IMR-90 (cell line): ENCODE measurements at regions of chr9 and their contacts with region 1.

Region 1: GRCh38 chr9:131334629-131335367 is 45.3 kb downstream of the PLPP7 start:
- DNase-seq: peak; percentile 38
- ATAC-seq: peak; percentile 18
- H3K4me3 ChIP-seq: no peak overlapping the region
- H3K27ac ChIP-seq: no peak overlapping the region
- H3K4me1 ChIP-seq: no peaks in the 10 kb centered on the region
- H3K27me3 ChIP-seq: no peaks in the 10 kb centered on the region
- CTCF ChIP-seq: no peak
- POLR2A ChIP-seq: no peak
- RAD21 ChIP-seq: no peak

Region 2: GRCh38 chr9:131053896-131054295 is 280.9 kb before region 1 on chr9:
- CTCF ChIA-PET with region 1: interaction called, 3 read pairs
- POLR2A ChIA-PET with region 1: no interaction called
- dilution Hi-C with region 1: no loop called
- in situ Hi-C with region 1: no loop called
- intact Hi-C with region 1: loop called (anchors 1 kb)
- DNase-seq: no peak
- ATAC-seq: no peak
- H3K4me3 ChIP-seq: no peak overlapping the region
- H3K27ac ChIP-seq: no peak overlapping the region
- H3K4me1 ChIP-seq: no peaks in the 10 kb centered on the region
- H3K27me3 ChIP-seq: peaks cover 25% of the 10 kb centered on the region
- CTCF ChIP-seq: no peak
- POLR2A ChIP-seq: no peak
- RAD21 ChIP-seq: no peak

Region 3: DNA sequence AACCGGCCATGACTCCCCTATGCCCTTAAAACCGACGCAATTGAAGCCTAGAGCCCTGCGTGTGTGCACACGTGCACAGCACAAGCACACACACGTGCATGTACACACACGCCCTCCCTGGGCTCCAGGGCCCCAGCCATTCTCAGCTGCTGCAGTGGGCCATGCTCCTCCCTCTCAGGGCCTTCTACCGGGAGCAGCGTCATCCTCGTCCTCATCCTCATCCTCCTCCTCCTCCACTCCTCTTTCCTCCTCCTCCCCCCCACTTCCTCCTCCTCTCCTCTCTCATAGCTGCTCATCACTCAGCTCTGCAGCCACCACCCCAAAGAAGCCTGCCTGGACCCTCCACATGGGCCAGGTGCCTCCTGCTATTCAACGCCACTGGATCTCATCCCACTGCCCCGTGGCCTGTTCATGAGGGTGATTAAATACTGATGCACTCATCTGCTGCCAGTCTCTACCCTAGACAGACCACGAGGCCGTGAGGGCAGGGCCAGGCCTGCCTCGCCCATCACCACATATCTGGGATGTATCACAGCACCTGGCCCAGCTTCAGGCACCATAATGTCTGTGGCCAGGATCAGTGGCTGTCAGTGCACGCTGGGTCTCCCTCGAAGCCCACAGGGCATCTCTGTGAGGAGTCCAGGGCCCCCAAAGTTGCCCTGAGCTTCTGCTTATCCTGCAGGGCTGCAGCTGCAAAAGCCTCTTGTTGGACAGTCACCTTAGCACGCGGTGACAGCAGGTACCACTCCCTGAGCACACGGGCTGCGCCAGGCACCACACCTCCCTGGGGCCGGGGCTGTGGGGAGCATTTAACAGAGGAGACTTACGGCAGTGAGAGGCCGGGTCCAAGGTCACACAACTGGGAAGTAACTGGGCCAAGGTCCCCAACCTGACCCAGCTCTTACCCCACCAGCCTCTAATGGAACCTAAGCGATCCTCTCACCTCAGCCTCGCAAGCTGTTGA is 68.2 kb before region 1 on chr9:
- CTCF ChIA-PET with region 1: no interaction called
- POLR2A ChIA-PET with region 1: no interaction called
- dilution Hi-C with region 1: no loop called
- in situ Hi-C with region 1: no loop called
- intact Hi-C with region 1: no loop called
- DNase-seq: no peak
- ATAC-seq: no peak
- H3K4me3 ChIP-seq: no peak overlapping the region
- H3K27ac ChIP-seq: no peak overlapping the region
- H3K4me1 ChIP-seq: no peaks in the 10 kb centered on the region
- H3K27me3 ChIP-seq: peaks cover 5% of the 10 kb centered on the region; the same call in 1 of the 2 replicates
- CTCF ChIP-seq: no peak
- POLR2A ChIP-seq: no peak
- RAD21 ChIP-seq: no peak